Esophagus muscularis mucosa (tissue), 4 donors: ENCODE measurements at regions of chr9 and their contacts with region 1.

Region 1: GRCh38 chr9:77433675-77434445 is 214.3 kb downstream of the GNA14 start:
- DNase-seq: no peak
- H3K4me3 ChIP-seq: no peak overlapping the region
- H3K27ac ChIP-seq: no peak overlapping the region
- H3K4me1 ChIP-seq: peaks cover 0 to 11% (median 8%) of the 10 kb centered on the region in 4 donors
- H3K27me3 ChIP-seq: no peaks in the 10 kb centered on the region
- CTCF ChIP-seq: peak; percentile 86 to 97 (median 88)
- EP300 ChIP-seq: no peak
- POLR2A ChIP-seq: no peak

Region 2: DNA sequence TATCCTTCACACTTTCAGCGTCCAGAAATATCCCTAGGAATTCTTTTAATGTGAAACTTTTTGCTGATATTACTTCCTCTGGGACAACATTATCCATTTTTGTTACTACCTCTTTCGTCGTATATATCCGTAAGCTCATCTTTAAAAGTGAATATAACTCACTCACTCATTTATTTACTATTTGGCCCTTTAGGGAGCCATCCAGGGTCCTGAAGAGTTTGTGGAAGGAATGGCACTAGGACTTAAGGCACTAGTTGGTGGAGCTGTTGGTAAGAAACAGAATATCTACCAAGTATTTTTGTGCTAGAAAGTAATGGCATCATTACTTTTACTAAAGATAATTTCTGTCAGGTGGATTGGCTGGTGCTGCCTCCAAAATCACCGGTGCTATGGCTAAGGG is 63.8 kb before region 1 on chr9:
- intact Hi-C with region 1: no loop called
- DNase-seq: no peak
- H3K4me3 ChIP-seq: no peak overlapping the region
- H3K27ac ChIP-seq: no peak overlapping the region
- H3K4me1 ChIP-seq: no peaks in the 10 kb centered on the region
- H3K27me3 ChIP-seq: no peaks in the 10 kb centered on the region
- CTCF ChIP-seq: no peak
- EP300 ChIP-seq: no peak
- POLR2A ChIP-seq: no peak

Region 3: GRCh38 chr9:78121488-78121887 is 687.6 kb after region 1 on chr9:
- intact Hi-C with region 1: loop called (anchors 10 kb)
- DNase-seq: no peak
- H3K4me3 ChIP-seq: no peak overlapping the region
- H3K27ac ChIP-seq: no peak overlapping the region
- H3K4me1 ChIP-seq: no peaks in the 10 kb centered on the region
- H3K27me3 ChIP-seq: no peaks in the 10 kb centered on the region
- CTCF ChIP-seq: peak; percentile 48 to 61 (median 50)
- EP300 ChIP-seq: no peak
- POLR2A ChIP-seq: no peak

Region 4: GRCh38 chr9:78213712-78214111 is 779.9 kb after region 1 on chr9:
- intact Hi-C with region 1: loop called (anchors 10 kb)
- DNase-seq: peak; percentile 66
- H3K4me3 ChIP-seq: no peak overlapping the region
- H3K27ac ChIP-seq: no peak overlapping the region
- H3K4me1 ChIP-seq: peaks cover 0 to 13% (median 5%) of the 10 kb centered on the region in 4 donors
- H3K27me3 ChIP-seq: no peaks in the 10 kb centered on the region
- CTCF ChIP-seq: peak in 2 of 3 experiments; percentile 18 to 43
- EP300 ChIP-seq: no peak
- POLR2A ChIP-seq: no peak